Left cardiac atrium (tissue), 4 donors: ENCODE measurements at regions of chr14 and their contacts with region 1.

Region 1: DNA sequence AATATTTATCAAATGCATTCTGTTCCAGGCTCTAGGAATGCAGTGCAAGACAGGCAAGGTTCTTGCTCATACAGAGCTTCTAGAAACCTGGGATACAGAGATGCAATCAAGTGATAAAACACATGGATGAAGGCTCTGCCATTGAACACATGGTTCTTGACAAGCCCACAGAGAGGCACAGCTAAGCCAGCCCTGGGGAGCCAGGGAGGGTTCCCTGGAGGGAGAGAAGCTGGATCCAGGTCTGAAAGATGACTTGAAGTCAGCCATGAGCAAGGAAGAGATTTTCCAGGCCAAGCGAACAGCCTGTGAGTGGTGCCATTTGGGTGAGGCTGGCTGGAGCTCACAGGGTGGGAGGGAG is 66.2 kb downstream of the IRF2BPL start:
- DNase-seq: no peak
- ATAC-seq: no peak

Region 2: GRCh38 chr14:76882651-76883050 is 79.6 kb before region 1 on chr14:
- intact Hi-C with region 1: no loop called
- DNase-seq: no peak
- ATAC-seq: peak; percentile 10 to 17

Region 3: DNA sequence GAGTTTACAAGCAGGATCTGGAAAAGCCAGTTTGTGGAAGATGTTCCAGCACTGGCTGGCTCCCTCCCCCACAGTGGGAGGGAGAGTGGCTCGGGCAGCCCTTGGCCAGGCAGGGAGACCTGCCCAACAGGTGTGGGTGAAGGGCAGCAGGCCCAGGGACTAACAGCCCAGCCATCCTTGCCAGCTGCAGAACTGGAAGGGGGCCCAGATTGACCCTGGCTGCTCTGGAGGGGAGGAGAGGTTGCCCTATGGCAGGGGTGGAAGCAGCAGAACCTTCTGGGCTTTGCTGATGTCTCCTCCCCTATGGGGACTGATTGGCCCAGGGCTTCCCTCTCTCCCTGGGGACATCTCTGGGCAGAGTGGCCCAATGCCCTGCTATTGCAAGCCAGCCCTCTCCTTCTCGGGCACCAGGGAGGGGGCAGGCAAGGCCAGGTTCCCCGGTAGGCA is 45.7 kb after region 1 on chr14:
- intact Hi-C with region 1: loop called (anchors 5 kb)
- DNase-seq: no peak
- ATAC-seq: peak; percentile 45 to 70

Region 4: GRCh38 chr14:77023001-77023996 is 61.0 kb after region 1 on chr14:
- intact Hi-C with region 1: loop called (anchors 5 kb)
- DNase-seq: no peak
- ATAC-seq: peak in 1 of 2 donors; percentile 13

Region 5: GRCh38 chr14:77067632-77068514 is 105.6 kb after region 1 on chr14:
- intact Hi-C with region 1: no loop called
- DNase-seq: peak; percentile 67
- ATAC-seq: peak; percentile 76 to 77

Region 6: DNA sequence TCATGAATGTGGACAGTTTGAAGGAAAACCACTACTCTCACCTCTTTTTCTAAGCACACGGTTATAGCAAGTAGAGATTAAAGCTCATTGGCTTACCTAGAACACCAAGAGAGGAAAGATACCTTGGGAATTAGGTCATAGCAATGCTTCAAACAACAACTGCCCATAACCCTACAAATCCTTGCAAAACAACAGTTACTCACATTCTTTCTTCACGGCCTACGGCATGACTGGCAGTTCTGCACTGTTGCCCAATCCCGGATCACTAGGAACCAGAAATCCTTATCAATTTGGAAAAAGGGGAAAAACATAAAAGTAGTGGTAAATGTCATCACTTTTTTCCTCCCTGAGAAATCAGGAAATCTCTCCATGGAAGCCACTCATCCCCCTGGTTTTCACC is 546.0 kb after region 1 on chr14:
- intact Hi-C with region 1: no loop called
- DNase-seq: no peak
- ATAC-seq: peak; percentile 86 to 95